Natural killer cell (primary cell): ENCODE measurements at regions of chr2 and their contacts with region 1.

Region 1: DNA sequence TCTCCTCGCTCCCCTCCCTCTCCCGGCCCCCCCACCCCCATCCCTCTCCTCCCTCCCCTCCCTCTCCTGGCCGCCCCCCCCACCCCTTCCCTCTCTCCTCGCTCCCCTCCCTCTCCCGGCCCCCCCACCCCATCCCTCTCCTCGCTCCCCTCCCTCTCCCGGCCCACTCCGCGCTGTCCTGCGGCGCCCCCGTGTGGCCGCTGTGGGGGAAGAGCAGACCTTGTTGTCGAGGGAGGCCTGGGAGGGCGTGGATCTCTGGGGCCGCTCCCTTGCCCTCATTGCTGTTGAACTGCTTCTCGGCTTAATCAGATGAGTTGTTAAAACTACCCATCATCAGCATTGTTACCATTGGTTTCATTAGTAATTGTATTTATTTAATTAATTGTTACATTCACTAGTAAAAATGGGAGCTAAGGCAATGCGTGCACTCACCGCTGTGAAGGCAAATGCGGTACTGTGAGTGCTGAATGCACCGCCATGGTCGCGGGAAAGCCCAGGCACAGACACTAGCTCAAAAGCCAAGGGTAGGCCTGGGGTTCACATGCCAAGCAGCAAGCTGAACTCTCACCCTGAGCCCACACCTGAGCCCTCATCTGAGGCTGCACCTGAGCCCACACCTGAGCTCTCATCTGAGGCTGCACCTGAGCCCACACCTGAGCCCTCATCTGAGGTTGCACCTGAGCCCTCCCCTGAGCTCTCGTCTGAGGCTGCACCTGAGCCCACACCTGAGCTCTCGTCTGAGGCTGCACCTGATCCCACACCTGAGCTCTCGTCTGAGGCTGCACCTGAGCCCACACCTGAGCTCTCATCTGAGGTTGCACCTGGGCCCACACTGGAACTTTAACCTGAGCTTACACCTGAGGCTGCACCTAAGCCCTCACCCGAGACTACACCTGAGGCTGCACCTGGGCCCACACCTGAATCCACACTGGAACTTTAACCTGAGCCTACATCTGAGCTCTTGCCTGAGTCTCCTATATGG is 8.8 kb downstream of the RTP5 start:
- DNase-seq: peak; percentile 72 to 88
- ATAC-seq: peak in 2 of 3 donors; percentile 30
- H3K4me3 ChIP-seq: no peak overlapping the region
- H3K4me3 Mint-ChIP-seq: no peak overlapping the region
- H3K27ac ChIP-seq: no peak overlapping the region
- H3K27ac Mint-ChIP-seq: no peak overlapping the region
- H3K4me1 ChIP-seq: peaks cover 38% of the 10 kb centered on the region
- H3K4me1 Mint-ChIP-seq: peaks cover 25 to 34% of the 10 kb centered on the region in 2 donors
- H3K27me3 ChIP-seq: no peaks in the 10 kb centered on the region
- H3K27me3 Mint-ChIP-seq: no peaks in the 10 kb centered on the region
- CTCF ChIP-seq: peak; percentile 65

Region 2: GRCh38 chr2:241355983-241356870 is 522.1 kb before region 1 on chr2 and contains the start of gene FARP2:
- intact Hi-C with region 1: loop called (anchors 10 kb)
- DNase-seq: peak; percentile 93 to 99
- ATAC-seq: peak; percentile 92 to 97 (median 92)
- H3K4me3 ChIP-seq: peak within 1 kb of the TSS; percentile 54
- H3K4me3 Mint-ChIP-seq: peak within 1 kb of the TSS; percentile 84
- H3K27ac ChIP-seq: peak within 1 kb of the TSS; percentile 66
- H3K27ac Mint-ChIP-seq: peak within 1 kb of the TSS; percentile 79 to 85
- H3K4me1 ChIP-seq: peaks cover 16% of the 10 kb centered on the region
- H3K4me1 Mint-ChIP-seq: peaks cover 7 to 26% of the 10 kb centered on the region in 2 donors
- H3K27me3 ChIP-seq: no peaks in the 10 kb centered on the region
- H3K27me3 Mint-ChIP-seq: no peaks in the 10 kb centered on the region
- CTCF ChIP-seq: no peak
- total RNA-seq, gene FARP2: 26.8 to 40.6 (median 31.6) TPM

Region 3: DNA sequence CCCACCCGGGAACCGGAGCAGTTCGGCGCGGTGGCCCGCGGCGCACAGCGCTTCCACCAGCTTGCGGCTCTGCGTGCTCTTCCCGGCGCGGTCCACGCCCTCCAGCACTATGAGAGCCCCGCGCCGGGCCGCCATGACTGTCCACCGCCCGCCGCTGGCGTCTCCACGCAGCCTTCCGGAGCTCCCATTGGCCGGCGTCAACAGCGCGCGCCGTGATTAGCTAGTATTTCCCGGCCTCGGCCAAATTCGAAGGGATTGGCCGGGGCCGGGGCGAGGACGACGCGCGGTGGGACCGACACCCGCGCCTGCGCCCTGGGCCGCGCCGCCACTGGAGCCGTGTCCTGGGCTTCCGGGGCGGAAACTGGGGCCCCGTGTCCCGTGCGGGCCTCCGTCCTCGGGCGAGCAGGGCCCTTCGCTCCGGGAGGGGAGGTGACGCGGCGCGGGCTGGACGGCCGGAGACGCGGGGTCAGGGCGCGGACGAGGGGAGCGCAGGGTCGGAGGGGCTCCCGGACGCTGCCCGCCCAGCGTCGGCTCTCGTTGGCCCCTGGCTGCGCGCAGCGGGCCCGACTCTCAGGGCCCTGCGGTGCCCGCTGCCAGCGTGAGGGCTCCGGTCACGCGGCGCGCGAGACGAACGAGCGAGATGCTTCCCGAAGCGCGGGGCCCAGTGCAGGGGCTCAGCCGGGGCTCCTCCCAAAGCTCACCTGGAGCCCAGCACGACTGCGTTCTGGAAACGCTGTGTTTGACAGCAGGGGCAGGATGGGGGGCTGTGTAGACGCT is 191.4 kb before region 1 on chr2 and contains the start of gene DTYMK:
- intact Hi-C with region 1: loop called (anchors 10 kb)
- DNase-seq: peak; percentile 96 to 97
- ATAC-seq: peak; percentile 93 to 98 (median 93)
- H3K4me3 ChIP-seq: peak within 1 kb of the TSS; percentile 84
- H3K4me3 Mint-ChIP-seq: peak within 1 kb of the TSS; percentile 94
- H3K27ac ChIP-seq: peak within 1 kb of the TSS; percentile 55
- H3K27ac Mint-ChIP-seq: peak within 1 kb of the TSS; percentile 87 to 88
- H3K4me1 ChIP-seq: peaks cover 18% of the 10 kb centered on the region
- H3K4me1 Mint-ChIP-seq: peaks cover 26 to 28% of the 10 kb centered on the region in 2 donors
- H3K27me3 ChIP-seq: no peaks in the 10 kb centered on the region
- H3K27me3 Mint-ChIP-seq: no peaks in the 10 kb centered on the region
- CTCF ChIP-seq: no peak
- total RNA-seq, gene DTYMK: 15.4 to 17.5 (median 15.6) TPM

Region 4: DNA sequence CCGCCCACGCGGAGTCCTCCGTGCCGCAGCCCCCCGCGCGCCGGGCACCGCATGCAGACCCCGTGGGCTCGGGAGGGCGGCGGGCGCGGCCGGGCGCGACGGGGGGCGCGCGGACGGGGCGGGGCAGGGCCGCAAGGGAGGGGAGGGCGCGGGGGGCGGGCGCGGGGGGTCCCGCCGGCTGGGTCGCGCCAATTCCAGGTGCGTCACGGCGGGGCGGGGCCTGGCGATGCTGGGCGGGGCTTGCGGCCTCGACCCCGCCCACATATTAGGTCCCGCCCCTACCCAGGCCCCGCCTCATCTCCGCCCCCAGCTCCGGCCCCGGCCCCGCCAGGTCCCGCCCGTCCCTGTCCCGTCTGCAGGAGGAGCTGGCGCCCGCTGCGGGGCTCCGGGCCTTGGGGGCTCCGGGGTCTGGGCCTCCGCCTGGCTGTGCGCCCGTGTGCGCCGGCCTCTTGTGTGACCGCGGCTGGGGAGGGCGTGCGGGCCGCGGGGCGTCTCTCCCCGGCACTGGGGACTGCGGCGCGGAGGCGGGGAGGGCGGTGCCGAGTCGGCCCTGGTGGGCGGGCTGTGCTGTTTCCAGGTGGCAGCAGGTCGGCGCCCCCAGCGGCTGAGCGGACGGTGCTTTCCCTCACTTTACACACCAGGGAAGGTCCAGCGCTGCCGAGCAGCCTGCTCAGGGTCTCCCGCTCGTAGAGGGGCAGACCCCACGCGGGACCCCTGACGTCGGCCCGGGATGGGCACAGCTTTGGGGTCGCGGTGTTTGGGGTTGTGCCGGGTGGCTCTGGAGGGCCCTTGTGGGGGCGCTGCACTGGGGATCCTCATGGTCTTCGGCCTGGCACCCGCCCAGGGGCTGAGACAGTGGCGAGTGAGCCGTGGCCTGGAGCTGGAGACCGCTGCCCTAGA is 175.9 kb before region 1 on chr2:
- intact Hi-C with region 1: loop called (anchors 2 kb)
- DNase-seq: peak; percentile 86 to 93
- ATAC-seq: peak; percentile 81 to 94 (median 85)
- H3K4me3 ChIP-seq: peak overlapping the region; percentile 59
- H3K4me3 Mint-ChIP-seq: peak overlapping the region; percentile 86
- H3K27ac ChIP-seq: peak overlapping the region; percentile 76
- H3K27ac Mint-ChIP-seq: peak overlapping the region; percentile 80 to 84
- H3K4me1 ChIP-seq: peaks cover 15% of the 10 kb centered on the region
- H3K4me1 Mint-ChIP-seq: peaks cover 7 to 13% of the 10 kb centered on the region in 2 donors
- H3K27me3 ChIP-seq: no peaks in the 10 kb centered on the region
- H3K27me3 Mint-ChIP-seq: no peaks in the 10 kb centered on the region
- CTCF ChIP-seq: peak; percentile 52

Region 5: DNA sequence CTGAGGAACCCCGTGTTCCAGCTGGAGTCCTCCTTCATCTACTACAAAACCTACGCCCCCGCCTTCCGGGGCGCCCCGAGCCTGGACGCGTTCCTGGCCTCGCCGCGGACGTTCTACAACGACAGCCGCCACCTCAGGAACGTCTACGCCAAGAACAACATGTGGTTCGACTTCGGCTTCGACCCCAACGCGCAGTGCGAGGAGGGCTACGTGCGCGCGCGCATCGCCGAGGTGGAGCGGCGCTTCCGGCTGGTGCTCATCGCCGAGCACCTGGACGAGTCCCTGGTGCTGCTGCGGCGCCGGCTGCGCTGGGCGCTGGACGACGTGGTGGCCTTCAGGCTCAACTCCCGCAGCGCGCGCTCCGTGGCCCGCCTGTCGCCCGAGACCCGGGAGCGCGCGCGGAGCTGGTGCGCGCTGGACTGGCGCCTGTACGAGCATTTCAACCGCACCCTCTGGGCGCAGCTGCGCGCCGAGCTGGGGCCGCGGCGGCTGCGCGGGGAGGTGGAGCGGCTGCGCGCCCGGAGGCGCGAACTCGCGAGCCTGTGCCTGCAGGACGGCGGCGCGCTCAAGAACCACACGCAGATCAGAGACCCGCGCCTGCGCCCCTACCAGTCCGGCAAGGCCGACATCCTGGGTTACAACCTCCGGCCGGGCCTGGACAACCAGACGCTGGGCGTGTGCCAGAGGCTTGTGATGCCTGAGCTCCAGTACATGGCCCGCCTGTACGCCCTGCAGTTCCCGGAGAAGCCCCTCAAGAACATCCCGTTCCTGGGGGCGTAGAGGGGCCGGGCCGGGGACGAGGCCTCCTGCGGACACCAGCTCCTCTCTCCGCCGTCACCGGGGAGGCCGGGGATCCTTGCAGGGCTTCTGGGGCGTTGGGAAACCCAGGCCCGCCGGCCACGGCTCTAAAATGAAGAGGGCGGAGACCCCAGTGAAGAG is 74.6 kb before region 1 on chr2:
- intact Hi-C with region 1: loop called (anchors 5 kb)
- DNase-seq: peak; percentile 50 to 72
- ATAC-seq: peak; percentile 71 to 84 (median 79)
- H3K4me3 ChIP-seq: peak overlapping the region; percentile 34
- H3K4me3 Mint-ChIP-seq: peak overlapping the region; percentile 82
- H3K27ac ChIP-seq: no peak overlapping the region
- H3K27ac Mint-ChIP-seq: peak overlapping the region in 1 of 2 donors; percentile 17
- H3K4me1 ChIP-seq: peaks cover 22% of the 10 kb centered on the region
- H3K4me1 Mint-ChIP-seq: peaks cover 5 to 12% of the 10 kb centered on the region in 2 donors
- H3K27me3 ChIP-seq: peaks cover 14% of the 10 kb centered on the region
- H3K27me3 Mint-ChIP-seq: peaks cover 7 to 11% of the 10 kb centered on the region in 2 donors
- CTCF ChIP-seq: no peak

Region 6: DNA sequence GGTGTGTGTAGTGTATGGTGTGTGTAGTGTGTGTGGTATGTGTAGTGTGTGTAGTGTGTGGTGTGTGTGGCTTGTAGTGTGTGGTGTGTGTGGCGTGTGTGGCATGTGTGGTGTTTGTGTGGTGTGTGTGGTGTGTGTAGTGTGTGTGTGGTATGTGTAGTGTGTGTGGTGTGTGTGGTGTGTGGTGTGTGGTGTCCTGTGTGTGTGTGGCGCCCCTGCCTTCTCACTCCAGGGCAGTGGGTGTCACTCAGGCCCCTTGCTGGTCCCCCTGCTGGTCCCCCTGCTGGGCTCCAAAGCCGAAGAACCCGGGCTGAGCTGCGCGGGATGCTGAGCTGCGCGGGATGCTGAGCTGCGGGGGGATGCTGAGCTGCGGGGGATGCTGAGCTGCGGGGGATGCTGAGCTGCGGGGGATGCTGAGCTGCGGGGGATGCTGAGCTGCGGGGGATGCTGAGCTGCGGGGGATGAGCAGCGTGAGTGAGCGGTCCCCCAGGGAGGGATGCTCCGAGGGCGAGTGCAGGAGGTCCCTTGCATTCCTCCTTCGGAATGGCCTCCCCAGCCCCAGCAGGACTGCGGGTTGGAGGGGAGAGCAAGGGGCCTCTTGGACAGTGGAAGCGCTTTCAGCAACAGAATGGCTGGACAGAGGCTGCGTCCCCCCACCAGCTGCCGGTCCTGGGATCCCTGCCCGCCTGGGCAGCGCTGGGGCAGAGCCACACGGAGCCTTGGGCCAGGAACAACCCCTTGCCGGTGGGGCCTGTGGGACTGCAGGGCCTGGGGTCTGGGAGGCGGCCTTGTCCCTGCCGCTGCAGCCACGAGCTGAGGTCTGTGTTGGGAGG is 12.1 kb before region 1 on chr2:
- intact Hi-C with region 1: loop called (anchors 2 kb)
- DNase-seq: no peak
- ATAC-seq: peak in 1 of 3 donors; percentile 5
- H3K4me3 ChIP-seq: no peak overlapping the region
- H3K4me3 Mint-ChIP-seq: peak overlapping the region; percentile 6
- H3K27ac ChIP-seq: no peak overlapping the region
- H3K27ac Mint-ChIP-seq: peak overlapping the region in 1 of 2 donors; percentile 45
- H3K4me1 ChIP-seq: peaks cover 89% of the 10 kb centered on the region
- H3K4me1 Mint-ChIP-seq: peaks cover 48 to 72% of the 10 kb centered on the region in 2 donors
- H3K27me3 ChIP-seq: peaks cover 19% of the 10 kb centered on the region
- H3K27me3 Mint-ChIP-seq: peaks cover 0 to 32% of the 10 kb centered on the region in 2 donors
- CTCF ChIP-seq: no peak